ENCODE measurements at regions of chr20 and their contacts with region 1.

Region 1: DNA sequence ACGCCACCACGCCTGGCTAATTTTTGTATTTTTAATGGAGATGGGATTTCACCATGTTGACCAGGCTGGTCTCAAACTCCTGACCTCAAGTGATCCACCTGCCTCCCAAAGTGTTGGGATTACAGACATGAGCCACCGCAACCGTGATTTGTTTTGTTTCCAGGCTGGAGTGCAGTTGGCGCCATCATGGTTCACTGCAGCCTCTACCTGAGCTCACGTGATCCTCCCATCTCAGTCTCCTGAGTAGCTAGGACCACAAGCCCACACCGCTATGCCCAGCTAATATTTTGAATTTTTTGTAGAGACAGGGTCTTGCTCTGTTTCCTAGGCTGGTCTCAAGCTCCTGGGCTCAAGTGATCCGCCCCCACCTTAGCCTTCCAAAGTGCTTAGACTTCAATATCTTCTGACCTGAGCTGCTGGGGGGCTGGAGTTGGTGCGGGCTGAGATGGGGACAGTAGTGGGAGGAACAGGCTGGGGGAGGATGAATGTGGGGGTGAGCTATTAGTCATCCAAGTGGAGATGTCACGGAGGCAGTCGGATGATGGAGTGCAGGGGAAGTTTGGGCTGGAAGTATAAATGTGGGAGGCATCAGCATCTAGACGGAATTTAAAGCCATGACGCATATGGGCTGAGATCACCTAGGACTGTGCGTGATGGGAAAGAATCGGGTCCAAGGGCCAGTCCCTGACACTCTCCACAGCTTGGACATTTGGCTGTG is 23.1 kb upstream of the ZMYND8 start:
- DNase-seq: no peak
- H3K4me3 ChIP-seq: no peak overlapping the region
- H3K4me3 Mint-ChIP-seq: no peak overlapping the region
- H3K27ac ChIP-seq: no peak overlapping the region
- H3K27ac Mint-ChIP-seq: peak overlapping the region in 2 of 7 donors; percentile 26 to 79
- H3K4me1 ChIP-seq: peaks cover 8% of the 10 kb centered on the region
- H3K4me1 Mint-ChIP-seq: peaks cover 4 to 16% (median 11%) of the 10 kb centered on the region in 4 donors
- H3K27me3 ChIP-seq: no peaks in the 10 kb centered on the region
- H3K27me3 Mint-ChIP-seq: peaks cover 0 to 2% of the 10 kb centered on the region in 2 donors

Region 2: GRCh38 chr20:47252879-47253307 is 126.7 kb before region 1 on chr20:
- CTCF ChIA-PET with region 1: interaction called, 10 read pairs
- POLR2A ChIA-PET with region 1: no interaction called
- intact Hi-C with region 1: no loop called
- DNase-seq: no peak
- H3K4me3 ChIP-seq: no peak overlapping the region
- H3K4me3 Mint-ChIP-seq: no peak overlapping the region
- H3K27ac ChIP-seq: no peak overlapping the region
- H3K27ac Mint-ChIP-seq: no peak overlapping the region
- H3K4me1 ChIP-seq: no peaks in the 10 kb centered on the region
- H3K4me1 Mint-ChIP-seq: peaks cover 0 to 6% (median 2%) of the 10 kb centered on the region in 4 donors
- H3K27me3 ChIP-seq: no peaks in the 10 kb centered on the region
- H3K27me3 Mint-ChIP-seq: no peaks in the 10 kb centered on the region

Region 3: DNA sequence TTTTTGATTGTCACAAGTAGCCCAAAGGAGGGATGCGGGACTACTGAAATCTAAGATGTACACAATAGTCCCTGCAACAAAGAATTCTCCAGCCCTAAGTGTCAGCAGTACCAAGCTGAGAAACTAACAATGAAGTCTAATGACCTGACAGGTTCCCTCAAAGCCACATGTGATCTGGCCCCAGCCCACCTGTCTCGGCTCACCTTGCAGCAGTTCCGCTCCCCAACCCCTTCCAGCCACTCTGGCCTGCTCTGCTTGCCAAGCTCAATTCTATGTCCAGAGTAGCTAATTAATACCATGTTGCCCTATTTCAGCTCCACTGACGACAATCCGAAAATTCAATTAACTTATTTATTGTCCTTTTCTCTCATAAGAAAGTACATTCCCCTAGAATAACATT is 95.2 kb before region 1 on chr20:
- CTCF ChIA-PET with region 1: interaction called, 66 read pairs
- POLR2A ChIA-PET with region 1: no interaction called
- intact Hi-C with region 1: no loop called
- DNase-seq: no peak
- H3K4me3 ChIP-seq: no peak overlapping the region
- H3K4me3 Mint-ChIP-seq: no peak overlapping the region
- H3K27ac ChIP-seq: no peak overlapping the region
- H3K27ac Mint-ChIP-seq: peak overlapping the region in 2 of 7 donors; percentile 57 to 76
- H3K4me1 ChIP-seq: no peaks in the 10 kb centered on the region
- H3K4me1 Mint-ChIP-seq: peaks cover 0 to 1% (median 0%) of the 10 kb centered on the region in 4 donors
- H3K27me3 ChIP-seq: no peaks in the 10 kb centered on the region
- H3K27me3 Mint-ChIP-seq: no peaks in the 10 kb centered on the region

Region 4: GRCh38 chr20:47317127-47317895 is 62.3 kb before region 1 on chr20:
- CTCF ChIA-PET with region 1: interaction called, 12 read pairs
- POLR2A ChIA-PET with region 1: no interaction called
- intact Hi-C with region 1: no loop called
- DNase-seq: peak; percentile 4 to 63 (median 21)
- H3K4me3 ChIP-seq: no peak overlapping the region
- H3K4me3 Mint-ChIP-seq: peak overlapping the region in 4 of 8 donors; percentile 21 to 59 (median 46)
- H3K27ac ChIP-seq: peak overlapping the region; percentile 12
- H3K27ac Mint-ChIP-seq: peak overlapping the region; percentile 53 to 91 (median 78)
- H3K4me1 ChIP-seq: peaks cover 57% of the 10 kb centered on the region
- H3K4me1 Mint-ChIP-seq: peaks cover 42 to 73% (median 59%) of the 10 kb centered on the region in 4 donors
- H3K27me3 ChIP-seq: no peaks in the 10 kb centered on the region
- H3K27me3 Mint-ChIP-seq: no peaks in the 10 kb centered on the region

Region 5: GRCh38 chr20:47389867-47390347 is 10.3 kb after region 1 on chr20:
- CTCF ChIA-PET with region 1: interaction called, 13 read pairs
- POLR2A ChIA-PET with region 1: no interaction called
- intact Hi-C with region 1: no loop called
- DNase-seq: no peak
- H3K4me3 ChIP-seq: no peak overlapping the region
- H3K4me3 Mint-ChIP-seq: no peak overlapping the region
- H3K27ac ChIP-seq: no peak overlapping the region
- H3K27ac Mint-ChIP-seq: no peak overlapping the region
- H3K4me1 ChIP-seq: no peaks in the 10 kb centered on the region
- H3K4me1 Mint-ChIP-seq: no peaks in the 10 kb centered on the region
- H3K27me3 ChIP-seq: no peaks in the 10 kb centered on the region
- H3K27me3 Mint-ChIP-seq: no peaks in the 10 kb centered on the region

Region 6: DNA sequence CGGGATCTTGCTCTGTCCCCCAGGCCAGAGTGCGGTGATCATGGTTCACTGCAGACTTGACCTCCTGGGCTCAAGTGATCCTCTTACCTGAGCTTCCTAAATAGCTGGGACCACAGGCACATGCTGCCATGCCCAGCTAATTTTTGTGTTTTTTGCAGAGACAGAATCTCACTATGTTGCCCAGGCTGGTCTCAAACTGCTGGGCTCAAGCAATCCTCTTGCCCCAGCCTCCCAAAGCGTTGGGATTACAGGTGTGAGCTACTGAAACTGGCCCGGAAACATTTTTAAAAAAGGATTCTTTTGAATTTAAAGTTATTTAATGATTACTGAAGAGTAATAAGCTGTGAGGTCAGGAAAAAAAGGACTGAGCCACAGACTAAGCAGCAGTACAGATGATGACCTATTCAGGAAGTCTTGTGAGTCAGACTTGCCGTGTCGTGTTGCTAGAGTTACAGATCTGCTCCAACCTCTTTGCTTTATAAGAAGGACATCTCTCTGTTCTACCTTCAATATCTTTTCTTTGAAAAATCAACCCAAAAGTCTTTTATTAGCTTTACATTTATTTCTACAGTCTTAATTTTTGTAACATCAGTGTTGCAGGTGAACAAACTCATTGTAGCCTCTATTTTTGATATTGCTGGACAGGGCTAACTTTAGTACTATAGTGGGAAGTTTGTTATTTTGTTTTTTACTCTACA is 230.8 kb after region 1 on chr20:
- CTCF ChIA-PET with region 1: interaction called, 10 read pairs
- POLR2A ChIA-PET with region 1: no interaction called
- intact Hi-C with region 1: no loop called
- DNase-seq: peak; percentile 30 to 93 (median 44)
- H3K4me3 ChIP-seq: no peak overlapping the region
- H3K4me3 Mint-ChIP-seq: peak overlapping the region in 7 of 8 donors; percentile 18 to 85 (median 61)
- H3K27ac ChIP-seq: peak overlapping the region; percentile 33
- H3K27ac Mint-ChIP-seq: peak overlapping the region; percentile 77 to 97 (median 94)
- H3K4me1 ChIP-seq: peaks cover 65% of the 10 kb centered on the region
- H3K4me1 Mint-ChIP-seq: peaks cover 53 to 77% (median 66%) of the 10 kb centered on the region in 4 donors
- H3K27me3 ChIP-seq: no peaks in the 10 kb centered on the region
- H3K27me3 Mint-ChIP-seq: no peaks in the 10 kb centered on the region

Region 7: GRCh38 chr20:47677635-47678453 is 298.3 kb after region 1 on chr20:
- CTCF ChIA-PET with region 1: no interaction called
- POLR2A ChIA-PET with region 1: no interaction called
- intact Hi-C with region 1: no loop called
- DNase-seq: peak; percentile 33 to 53 (median 47)
- H3K4me3 ChIP-seq: no peak overlapping the region
- H3K4me3 Mint-ChIP-seq: no peak overlapping the region
- H3K27ac ChIP-seq: no peak overlapping the region
- H3K27ac Mint-ChIP-seq: peak overlapping the region in 1 of 7 donors; percentile 53
- H3K4me1 ChIP-seq: no peaks in the 10 kb centered on the region
- H3K4me1 Mint-ChIP-seq: peaks cover 0 to 2% (median 0%) of the 10 kb centered on the region in 4 donors
- H3K27me3 ChIP-seq: no peaks in the 10 kb centered on the region
- H3K27me3 Mint-ChIP-seq: no peaks in the 10 kb centered on the region